GM12878 (cell line): ENCODE measurements at regions of chrX and their contacts with region 1.

Region 1: DNA sequence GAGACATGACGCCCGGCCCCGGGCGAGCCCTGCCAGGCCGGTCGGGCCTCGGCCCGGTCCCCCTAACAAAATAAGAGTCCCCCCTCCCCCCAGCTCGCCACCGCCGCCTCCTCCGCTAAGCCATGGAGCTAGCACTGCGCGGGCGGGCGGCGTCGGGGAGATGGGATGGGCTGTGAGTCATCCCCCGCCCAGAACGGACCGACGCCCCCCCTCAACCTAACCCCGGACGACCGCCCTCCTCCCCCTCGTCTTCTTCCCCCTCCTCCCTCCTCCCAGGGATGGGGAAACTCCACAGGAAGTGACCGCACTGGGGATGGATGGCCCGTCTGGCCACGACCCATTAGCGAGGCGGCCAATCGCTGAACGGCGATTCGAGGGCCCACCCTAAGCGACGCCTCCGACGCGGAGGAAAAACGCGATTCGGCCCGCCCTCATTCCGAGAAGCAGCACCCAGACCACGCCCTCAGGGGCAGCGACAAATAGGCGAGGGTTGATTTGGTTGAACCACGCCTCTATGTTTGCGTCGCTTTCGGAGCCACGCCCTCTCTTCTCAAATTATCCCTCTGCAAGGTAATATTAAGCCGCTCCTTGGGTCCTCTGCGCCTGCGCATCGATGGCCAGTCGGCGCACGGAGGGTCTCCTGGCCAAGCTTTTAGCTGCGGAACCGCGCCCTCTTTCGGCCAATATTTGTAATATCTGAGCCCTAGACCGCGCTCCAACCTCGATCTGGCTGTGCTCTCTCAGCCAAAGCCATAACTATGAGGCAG is at the start of gene TFE3:
- DNase-seq: peak; percentile 95
- ATAC-seq: peak; percentile 94
- H3K4me3 ChIP-seq: peak within 1 kb of the TSS; percentile 71
- H3K27ac ChIP-seq: peak within 1 kb of the TSS; percentile 89
- H3K4me1 ChIP-seq: peaks cover 5% of the 10 kb centered on the region; the same call in 1 of the 2 replicates
- H3K27me3 ChIP-seq: no peaks in the 10 kb centered on the region
- CTCF ChIP-seq: peak; percentile 48 to 70 (median 63)
- EP300 ChIP-seq: no peak
- POLR2A ChIP-seq: peak; percentile 45
- RAD21 ChIP-seq: peak; percentile 67
- polyA plus RNA-seq, gene TFE3: 3.5 TPM

Region 2: DNA sequence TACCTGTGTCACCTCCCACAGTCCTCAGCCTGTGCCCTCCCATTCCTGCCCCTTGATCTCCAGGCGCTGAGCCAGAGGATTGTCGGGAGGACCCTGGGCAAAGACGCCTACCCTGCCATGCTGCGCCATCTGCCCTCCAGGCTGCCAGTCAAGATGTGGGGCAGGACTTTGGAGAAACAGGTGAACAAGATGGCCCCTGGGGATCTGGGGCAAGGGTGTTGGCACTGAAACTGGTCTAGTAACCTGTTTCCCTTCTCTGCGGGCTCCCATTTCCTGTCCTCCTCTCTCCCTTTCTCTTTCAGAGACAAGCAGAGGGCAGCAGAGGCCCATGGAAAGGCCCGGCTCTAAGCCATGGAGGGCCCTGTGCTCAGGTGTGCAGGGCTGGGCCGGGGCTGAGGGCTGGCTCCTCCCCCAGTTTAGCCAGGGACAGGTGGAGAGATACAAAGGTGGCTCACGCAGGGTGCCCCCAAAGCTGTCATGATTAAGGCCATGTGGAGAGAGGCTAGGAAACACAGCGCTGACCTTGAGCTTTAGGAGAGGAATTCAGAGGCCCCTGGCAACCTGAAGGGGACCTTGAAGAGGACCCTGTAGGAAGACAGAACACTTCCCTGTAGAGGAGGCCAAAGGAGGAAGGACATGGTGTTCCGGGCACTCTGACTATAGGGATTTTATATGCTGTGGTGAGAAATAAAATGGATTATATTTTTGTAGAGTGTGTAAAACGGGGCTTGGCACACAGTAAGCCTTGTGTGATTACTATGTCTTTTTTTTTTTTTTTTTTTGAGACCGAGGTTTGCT is 281.5 kb before region 1 on chrX and contains the start of gene GLOD5:
- CTCF ChIA-PET with region 1: no interaction called
- POLR2A ChIA-PET with region 1: no interaction called
- RAD21 ChIA-PET with region 1: no interaction called
- SMC1A ChIA-PET with region 1: no interaction called
- in situ Hi-C with region 1: no loop called
- intact Hi-C with region 1: no loop called
- DNase-seq: no peak
- ATAC-seq: peak; percentile 75
- H3K4me3 ChIP-seq: no peak within 1 kb of the TSS
- H3K27ac ChIP-seq: no peak within 1 kb of the TSS
- H3K4me1 ChIP-seq: no peaks in the 10 kb centered on the region
- H3K27me3 ChIP-seq: no peaks in the 10 kb centered on the region
- CTCF ChIP-seq: peak in 1 of 3 experiments; percentile 26; a peak in 2 of 6 replicates
- EP300 ChIP-seq: no peak
- POLR2A ChIP-seq: no peak
- RAD21 ChIP-seq: peak; percentile 53
- polyA plus RNA-seq, gene GLOD5: not detected

Region 3: GRCh38 chrX:48801280-48802088 is 241.9 kb before region 1 on chrX and contains the start of gene HDAC6:
- CTCF ChIA-PET with region 1: interaction called, 3 read pairs
- POLR2A ChIA-PET with region 1: no interaction called
- RAD21 ChIA-PET with region 1: no interaction called
- SMC1A ChIA-PET with region 1: no interaction called
- in situ Hi-C with region 1: no loop called
- intact Hi-C with region 1: loop called (anchors 5 kb)
- DNase-seq: peak; percentile 94
- ATAC-seq: peak; percentile 90
- H3K4me3 ChIP-seq: peak within 1 kb of the TSS; percentile 69
- H3K27ac ChIP-seq: peak within 1 kb of the TSS; percentile 94
- H3K4me1 ChIP-seq: no peaks in the 10 kb centered on the region
- H3K27me3 ChIP-seq: no peaks in the 10 kb centered on the region
- CTCF ChIP-seq: no peak
- EP300 ChIP-seq: no peak
- POLR2A ChIP-seq: peak; percentile 75
- RAD21 ChIP-seq: no peak
- polyA plus RNA-seq, gene HDAC6: 8.3 to 17.5 TPM

Region 4: GRCh38 chrX:48917139-48918001 is 126.0 kb before region 1 on chrX:
- CTCF ChIA-PET with region 1: interaction called, 3 read pairs
- POLR2A ChIA-PET with region 1: no interaction called
- RAD21 ChIA-PET with region 1: no interaction called
- SMC1A ChIA-PET with region 1: no interaction called
- in situ Hi-C with region 1: no loop called
- intact Hi-C with region 1: loop called (anchors 5 kb)
- DNase-seq: peak; percentile 88
- ATAC-seq: peak; percentile 62
- H3K4me3 ChIP-seq: peak overlapping the region; percentile 65
- H3K27ac ChIP-seq: peak overlapping the region; percentile 83
- H3K4me1 ChIP-seq: peaks cover 9% of the 10 kb centered on the region
- H3K27me3 ChIP-seq: no peaks in the 10 kb centered on the region
- CTCF ChIP-seq: peak; percentile 86 to 97 (median 91)
- EP300 ChIP-seq: peak in 1 of 2 experiments; percentile 67; a peak in 2 of 4 replicates
- POLR2A ChIP-seq: peak; percentile 67
- RAD21 ChIP-seq: peak; percentile 55

Region 5: GRCh38 chrX:48957827-48958634 is 85.4 kb before region 1 on chrX:
- CTCF ChIA-PET with region 1: interaction called, 5 read pairs
- POLR2A ChIA-PET with region 1: interaction called, 23 read pairs
- RAD21 ChIA-PET with region 1: interaction called, 13 read pairs
- SMC1A ChIA-PET with region 1: interaction called, 3 read pairs
- in situ Hi-C with region 1: no loop called
- intact Hi-C with region 1: loop called (anchors 1 kb)
- DNase-seq: peak; percentile 87
- ATAC-seq: peak; percentile 93
- H3K4me3 ChIP-seq: peak overlapping the region; percentile 79; the same call in 1 of the 2 replicates
- H3K27ac ChIP-seq: peak overlapping the region; percentile 92
- H3K4me1 ChIP-seq: peaks cover 7% of the 10 kb centered on the region
- H3K27me3 ChIP-seq: no peaks in the 10 kb centered on the region
- CTCF ChIP-seq: no peak
- EP300 ChIP-seq: no peak
- POLR2A ChIP-seq: peak; percentile 77
- RAD21 ChIP-seq: no peak

Region 6: DNA sequence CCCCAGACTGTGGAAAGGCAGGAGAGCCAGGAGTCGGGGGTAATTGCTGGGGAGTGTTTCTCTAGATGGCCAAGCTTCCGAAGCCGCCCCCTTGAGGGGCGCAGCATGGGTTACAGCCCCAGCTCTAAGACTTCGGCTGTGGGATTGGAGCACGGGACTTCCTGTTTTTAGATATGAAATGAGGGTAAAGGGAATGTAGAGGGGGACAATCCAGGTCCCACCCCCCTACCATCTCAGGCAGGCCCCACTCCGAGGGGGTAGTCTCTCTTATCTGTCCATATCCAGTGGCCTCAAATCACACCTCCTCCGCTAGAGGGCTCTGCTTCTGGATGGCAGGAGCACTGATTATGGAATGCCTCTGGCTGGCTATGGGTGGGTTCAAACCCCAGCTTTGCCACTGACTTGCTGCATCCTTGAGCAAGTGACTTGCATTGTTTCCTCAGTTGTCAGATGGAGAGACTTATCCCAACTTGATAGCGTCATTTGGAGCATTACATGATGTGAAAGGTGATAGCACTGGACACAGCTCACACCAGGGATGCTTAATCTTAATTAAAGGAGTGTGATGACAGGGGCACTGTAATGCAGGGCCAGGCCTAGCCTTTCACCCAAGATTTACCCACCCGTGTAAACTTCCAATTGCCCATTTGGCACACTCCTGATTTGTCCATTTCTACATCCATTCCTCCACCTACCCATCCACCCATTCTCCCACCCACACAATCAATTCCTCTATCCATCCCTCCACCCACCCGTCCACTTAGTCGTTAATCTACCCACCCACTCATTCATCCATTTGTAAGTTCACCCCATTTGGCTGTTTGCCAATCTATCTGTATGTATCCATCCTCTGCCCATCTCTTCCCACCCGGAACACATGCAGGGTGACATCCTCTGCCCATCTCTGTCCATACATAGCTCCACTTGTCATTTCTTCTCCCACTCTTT is 70.9 kb before region 1 on chrX:
- CTCF ChIA-PET with region 1: interaction called, 16 read pairs
- POLR2A ChIA-PET with region 1: no interaction called
- RAD21 ChIA-PET with region 1: no interaction called
- SMC1A ChIA-PET with region 1: interaction called, 8 read pairs
- in situ Hi-C with region 1: loop called (anchors 5 kb)
- intact Hi-C with region 1: loop called (anchors 1 kb)
- DNase-seq: no peak
- ATAC-seq: peak; percentile 89
- H3K4me3 ChIP-seq: no peak overlapping the region
- H3K27ac ChIP-seq: no peak overlapping the region
- H3K4me1 ChIP-seq: peaks cover 5% of the 10 kb centered on the region
- H3K27me3 ChIP-seq: no peaks in the 10 kb centered on the region
- CTCF ChIP-seq: peak; percentile 46 to 57 (median 56)
- EP300 ChIP-seq: no peak
- POLR2A ChIP-seq: no peak; the same call in 1 of the 2 replicates
- RAD21 ChIP-seq: peak; percentile 39; the same call in 1 of the 2 replicates